Mammary epithelial cell (primary cell): ENCODE measurements at regions of chr16 and their contacts with region 1.

Region 1: GRCh38 chr16:69243479-69243878 is 56.5 kb downstream of the SNTB2 start:
- DNase-seq: no peak
- H3K4me3 ChIP-seq: no peak overlapping the region
- H3K27ac ChIP-seq: no peak overlapping the region
- H3K4me1 ChIP-seq: no peaks in the 10 kb centered on the region
- H3K27me3 ChIP-seq: no peaks in the 10 kb centered on the region
- CTCF ChIP-seq: no peak

Region 2: GRCh38 chr16:68915589-68915988 is 327.9 kb before region 1 on chr16:
- CTCF ChIA-PET with region 1: no interaction called
- dilution Hi-C with region 1: loop called (anchors 5 kb)
- in situ Hi-C with region 1: no loop called
- intact Hi-C with region 1: no loop called
- DNase-seq: peak; percentile 76
- H3K4me3 ChIP-seq: no peak overlapping the region
- H3K27ac ChIP-seq: peak overlapping the region; percentile 55
- H3K4me1 ChIP-seq: peaks cover 23% of the 10 kb centered on the region
- H3K27me3 ChIP-seq: no peaks in the 10 kb centered on the region
- CTCF ChIP-seq: peak in 1 of 2 donors; percentile 26

Region 3: DNA sequence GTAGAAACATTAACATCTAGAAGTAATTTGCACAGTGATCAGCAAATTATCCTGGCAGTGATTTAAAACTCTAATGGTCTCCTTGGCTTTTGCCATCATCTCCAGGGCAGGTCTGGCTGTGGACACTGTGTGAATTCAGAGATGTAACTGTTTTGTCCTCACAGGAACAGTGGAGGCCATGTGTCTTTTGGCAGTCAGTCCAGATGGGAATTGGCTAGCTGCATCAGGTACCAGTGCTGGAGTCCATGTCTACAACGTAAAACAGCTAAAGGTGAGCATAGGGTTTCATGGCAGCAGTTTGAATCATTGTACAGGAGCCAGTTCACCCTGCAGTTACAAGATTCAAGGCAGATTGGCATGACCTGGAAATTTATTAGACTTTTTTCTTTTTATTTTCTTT is 83.3 kb before region 1 on chr16:
- CTCF ChIA-PET with region 1: no interaction called
- dilution Hi-C with region 1: loop called (anchors 5 kb)
- in situ Hi-C with region 1: no loop called
- intact Hi-C with region 1: no loop called
- DNase-seq: no peak
- H3K4me3 ChIP-seq: no peak overlapping the region
- H3K27ac ChIP-seq: no peak overlapping the region
- H3K4me1 ChIP-seq: no peaks in the 10 kb centered on the region
- H3K27me3 ChIP-seq: no peaks in the 10 kb centered on the region
- CTCF ChIP-seq: no peak